ENCODE measurements at regions of chr9 and their contacts with region 1.

Region 1: GRCh38 chr9:8946461-8946860 is 1146.9 kb upstream of the DMAC1 start:
- DNase-seq: no peak

Region 2: DNA sequence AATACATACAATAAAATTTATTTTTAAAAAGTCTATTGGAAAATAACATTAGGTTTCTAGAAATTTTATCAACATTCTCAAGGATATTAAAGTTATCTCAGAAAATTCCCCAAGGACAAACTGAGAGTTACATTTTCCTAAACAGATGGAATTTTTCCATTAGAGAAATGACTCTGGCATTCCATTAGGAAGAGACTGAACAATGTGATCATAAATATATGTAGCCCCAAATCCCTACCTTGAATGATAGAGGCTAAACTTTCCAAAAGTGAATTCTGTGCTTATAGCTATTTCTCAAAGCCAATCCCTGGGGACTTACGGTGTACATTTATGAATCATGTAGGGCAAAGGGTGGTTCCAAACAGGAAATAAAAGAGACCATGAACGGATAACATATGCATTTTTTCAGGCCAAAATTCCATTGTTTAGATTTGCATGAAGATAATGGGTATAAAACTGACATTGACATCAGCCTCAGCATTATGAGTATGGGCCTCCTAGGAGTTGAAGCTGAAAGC is 34.1 kb after region 1 on chr9:
- intact Hi-C with region 1: no loop called
- DNase-seq: no peak

Region 3: DNA sequence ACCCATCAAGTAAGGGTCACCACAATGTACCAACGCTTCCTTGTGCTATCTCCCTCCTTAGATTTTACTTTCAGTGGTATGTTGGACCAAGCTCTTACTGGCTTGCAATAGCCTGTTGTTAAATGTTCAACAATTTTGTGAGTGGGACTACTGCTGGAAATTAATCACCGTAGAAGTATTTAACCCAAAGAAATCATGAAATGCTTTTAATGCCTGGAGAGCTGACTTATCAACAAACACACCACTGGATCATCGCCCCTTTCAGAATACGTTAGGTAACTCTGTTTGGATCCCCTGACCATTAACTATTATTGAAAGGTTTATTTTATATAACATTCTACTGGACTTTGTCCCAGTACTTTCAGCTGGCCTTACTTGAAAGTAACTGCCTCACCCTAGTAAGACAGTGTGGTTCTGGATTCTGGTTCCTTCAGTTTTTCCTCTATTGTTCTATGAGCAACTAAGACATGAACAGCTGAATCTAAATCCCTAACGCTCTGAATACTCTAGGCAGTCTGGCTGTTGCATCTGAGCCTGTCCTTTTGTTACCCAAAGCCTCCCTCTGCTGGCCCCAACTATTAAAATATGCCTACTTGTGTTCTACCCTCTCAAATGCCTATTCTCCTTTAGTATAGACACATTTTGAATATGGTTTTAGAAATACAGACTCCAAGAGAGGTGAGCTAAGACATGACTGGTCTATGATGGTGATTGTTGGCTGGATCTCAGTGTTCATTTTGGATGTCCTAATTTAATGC is 56.5 kb after region 1 on chr9:
- intact Hi-C with region 1: loop called (anchors 5 kb)
- DNase-seq: no peak

Region 4: GRCh38 chr9:9257999-9258498 is 311.6 kb after region 1 on chr9:
- intact Hi-C with region 1: no loop called
- DNase-seq: no peak